Calu3 (cell line): ENCODE measurements at regions of chr5 and their contacts with region 1.

Region 1: DNA sequence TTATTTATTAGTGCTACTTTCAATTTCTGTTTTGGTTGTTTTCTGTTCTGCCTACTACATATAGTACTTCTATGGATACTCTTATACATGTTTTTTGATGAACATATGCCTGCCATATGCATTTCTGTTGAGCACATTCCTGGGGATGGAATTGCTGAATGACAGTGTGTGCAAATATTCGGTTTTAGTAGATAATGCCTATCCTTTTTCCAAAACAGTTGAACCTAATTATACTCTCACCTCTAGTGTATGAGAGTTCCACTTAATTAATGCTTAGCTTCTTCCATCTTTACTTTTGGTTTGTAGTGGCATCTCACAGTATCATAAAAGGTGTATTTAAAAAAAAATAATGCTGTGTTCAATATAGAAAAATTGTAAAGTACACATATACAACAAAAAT is 96.8 kb downstream of the ADGRV1 start:
- DNase-seq: no peak
- H3K4me3 Mint-ChIP-seq: no peak overlapping the region
- H3K27ac Mint-ChIP-seq: no peak overlapping the region
- H3K4me1 Mint-ChIP-seq: no peaks in the 10 kb centered on the region
- H3K27me3 Mint-ChIP-seq: peaks cover 8% of the 10 kb centered on the region
- CTCF ChIP-seq: no peak

Region 2: GRCh38 chr5:90709323-90710155 is 54.1 kb after region 1 on chr5:
- CTCF ChIA-PET with region 1: no interaction called
- intact Hi-C with region 1: no loop called
- DNase-seq: peak; percentile 71
- H3K4me3 Mint-ChIP-seq: no peak overlapping the region
- H3K27ac Mint-ChIP-seq: no peak overlapping the region
- H3K4me1 Mint-ChIP-seq: no peaks in the 10 kb centered on the region
- H3K27me3 Mint-ChIP-seq: no peaks in the 10 kb centered on the region
- CTCF ChIP-seq: peak; percentile 57

Region 3: DNA sequence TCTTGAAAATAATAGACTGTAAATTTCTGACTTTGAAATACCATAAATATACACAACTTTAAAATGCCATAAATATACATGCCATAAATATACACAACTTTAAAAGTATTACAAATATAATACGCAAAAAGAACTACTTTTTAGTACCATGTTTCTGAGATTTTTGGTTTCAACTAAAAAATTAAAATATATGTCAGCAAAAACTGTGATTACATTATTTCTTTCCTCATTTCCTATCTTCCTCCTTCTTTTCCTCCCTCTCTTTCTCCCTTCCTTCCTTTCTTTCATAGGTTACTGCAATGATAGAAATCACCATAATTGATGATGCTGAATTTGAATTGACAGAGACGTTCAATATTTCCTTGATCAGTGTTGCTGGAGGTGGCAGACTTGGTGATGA is 103.7 kb after region 1 on chr5:
- CTCF ChIA-PET with region 1: interaction called, 10 read pairs
- intact Hi-C with region 1: no loop called
- DNase-seq: no peak
- H3K4me3 Mint-ChIP-seq: no peak overlapping the region
- H3K27ac Mint-ChIP-seq: no peak overlapping the region
- H3K4me1 Mint-ChIP-seq: no peaks in the 10 kb centered on the region
- H3K27me3 Mint-ChIP-seq: no peaks in the 10 kb centered on the region
- CTCF ChIP-seq: no peak